CD4-positive, alpha-beta T cell (primary cell): ENCODE measurements at regions of chr5 and their contacts with region 1.

Region 1: GRCh38 chr5:54944364-54944763 is 41.0 kb downstream of the ESM1 start:
- DNase-seq: peak in 11 of 14 experiments; percentile 11 to 77 (median 29)
- ATAC-seq: peak; percentile 58
- H3K4me3 ChIP-seq: no peak overlapping the region
- H3K4me3 Mint-ChIP-seq: no peak overlapping the region
- H3K27ac ChIP-seq: no peak overlapping the region
- H3K27ac Mint-ChIP-seq: no peak overlapping the region
- H3K4me1 ChIP-seq: peaks cover 3% of the 10 kb centered on the region
- H3K4me1 Mint-ChIP-seq: no peaks in the 10 kb centered on the region
- H3K27me3 ChIP-seq: no peaks in the 10 kb centered on the region
- H3K27me3 Mint-ChIP-seq: no peaks in the 10 kb centered on the region
- CTCF ChIP-seq: peak; percentile 89

Region 2: GRCh38 chr5:55146543-55147151 is 202.3 kb after region 1 on chr5:
- CTCF ChIA-PET with region 1: interaction called, 31 read pairs
- POLR2A ChIA-PET with region 1: interaction called, 14 read pairs
- intact Hi-C with region 1: loop called (anchors 1 kb)
- DNase-seq: peak; percentile 68 to 90 (median 76)
- ATAC-seq: peak; percentile 95
- H3K4me3 ChIP-seq: no peak overlapping the region
- H3K4me3 Mint-ChIP-seq: no peak overlapping the region
- H3K27ac ChIP-seq: no peak overlapping the region
- H3K27ac Mint-ChIP-seq: no peak overlapping the region
- H3K4me1 ChIP-seq: peaks cover 15% of the 10 kb centered on the region
- H3K4me1 Mint-ChIP-seq: peaks cover 14% of the 10 kb centered on the region
- H3K27me3 ChIP-seq: no peaks in the 10 kb centered on the region
- H3K27me3 Mint-ChIP-seq: peaks cover 10% of the 10 kb centered on the region
- CTCF ChIP-seq: peak; percentile 99

Region 3: GRCh38 chr5:55159763-55160492 is 215.6 kb after region 1 on chr5 and contains the start of gene GPX8:
- CTCF ChIA-PET with region 1: interaction called, 14 read pairs
- POLR2A ChIA-PET with region 1: interaction called, 6 read pairs
- intact Hi-C with region 1: no loop called
- DNase-seq: peak in 5 of 14 experiments; percentile 7 to 75 (median 67)
- ATAC-seq: peak; percentile 68
- H3K4me3 ChIP-seq: no peak within 1 kb of the TSS
- H3K4me3 Mint-ChIP-seq: no peak within 1 kb of the TSS
- H3K27ac ChIP-seq: no peak within 1 kb of the TSS
- H3K27ac Mint-ChIP-seq: no peak within 1 kb of the TSS
- H3K4me1 ChIP-seq: no peaks in the 10 kb centered on the region
- H3K4me1 Mint-ChIP-seq: no peaks in the 10 kb centered on the region
- H3K27me3 ChIP-seq: peaks cover 4 to 18% of the 10 kb centered on the region in 2 experiments
- H3K27me3 Mint-ChIP-seq: peaks cover 50% of the 10 kb centered on the region
- CTCF ChIP-seq: peak; percentile 74
- total RNA-seq, gene GPX8: not detected